Activated CD4-positive, alpha-beta T cell treated with anti-CD3 and anti-CD28 coated beads for 36 hours (primary cell): ENCODE measurements at regions of chr17 and their contacts with region 1.

Region 1: GRCh38 chr17:20121359-20122253 is 112.4 kb downstream of the SPECC1 start:
- DNase-seq: peak; percentile 82
- ATAC-seq: peak; percentile 72
- H3K4me3 Mint-ChIP-seq: no peak overlapping the region
- H3K27ac Mint-ChIP-seq: no peak overlapping the region
- H3K4me1 Mint-ChIP-seq: no peaks in the 10 kb centered on the region
- H3K27me3 Mint-ChIP-seq: no peaks in the 10 kb centered on the region

Region 2: DNA sequence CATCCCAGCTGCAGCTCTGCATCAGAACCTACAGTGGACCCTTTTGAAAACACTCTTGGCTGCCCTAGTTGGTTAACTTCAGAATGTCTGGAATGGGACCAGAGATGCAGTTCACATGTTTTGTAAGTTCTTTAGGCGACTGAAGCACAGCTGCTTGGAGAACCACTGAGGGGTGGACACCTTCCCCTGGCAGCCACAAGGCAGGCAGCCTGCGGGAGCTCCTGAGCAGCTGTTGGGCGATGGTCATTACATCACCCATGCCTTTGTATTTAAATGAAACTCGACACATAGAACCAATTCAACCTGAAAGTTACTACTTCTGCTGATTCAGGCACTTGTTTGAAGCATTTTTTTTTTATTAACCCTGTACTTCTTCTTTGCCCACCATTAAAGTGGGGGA is 194.2 kb after region 1 on chr17:
- CTCF ChIA-PET with region 1: interaction called, 5 read pairs
- POLR2A ChIA-PET with region 1: no interaction called
- intact Hi-C with region 1: loop called (anchors 1 to 2 kb)
- DNase-seq: no peak
- ATAC-seq: no peak
- H3K4me3 Mint-ChIP-seq: no peak overlapping the region
- H3K27ac Mint-ChIP-seq: no peak overlapping the region
- H3K4me1 Mint-ChIP-seq: peaks cover 2% of the 10 kb centered on the region
- H3K27me3 Mint-ChIP-seq: peaks cover 2% of the 10 kb centered on the region